H1 (cell line): ENCODE measurements at regions of chr16 and their contacts with region 1.

Region 1: DNA sequence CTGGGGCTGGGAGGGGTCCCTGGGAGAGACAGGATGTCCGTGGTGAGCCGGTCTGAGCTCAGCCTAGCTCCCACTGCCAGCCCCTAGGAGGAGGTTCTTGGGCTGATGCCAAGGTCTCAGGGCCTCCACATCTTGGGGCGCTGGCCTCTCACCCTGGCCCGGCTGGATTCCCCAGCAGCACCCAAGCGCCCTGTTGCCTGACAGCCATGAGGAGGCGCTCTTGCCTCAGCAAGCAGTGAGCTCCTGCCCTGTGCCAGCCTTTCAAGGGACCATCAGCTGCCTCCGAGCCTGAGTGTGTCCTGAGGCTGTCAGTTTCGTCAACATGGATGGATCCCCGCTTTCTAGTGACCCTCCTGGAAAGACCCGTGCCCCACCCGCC is 234.9 kb upstream of the CIBAR2 start:
- DNase-seq: peak in 1 of 2 experiments; percentile 74
- H3K4me3 ChIP-seq: no peak overlapping the region
- H3K27ac ChIP-seq: no peak overlapping the region
- H3K4me1 ChIP-seq: peaks cover 0 to 13% (median under 1%) of the 10 kb centered on the region in 4 experiments; a peak in 4 of 7 replicates
- H3K27me3 ChIP-seq: no peaks in the 10 kb centered on the region
- CTCF ChIP-seq: peak; percentile 89 to 95 (median 93)
- EP300 ChIP-seq: no peak
- POLR2A ChIP-seq: no peak
- RAD21 ChIP-seq: peak; percentile 91 to 95

Region 2: GRCh38 chr16:85321509-85322271 is 25.5 kb before region 1 on chr16:
- CTCF ChIA-PET with region 1: interaction called, 10 read pairs
- POLR2A ChIA-PET with region 1: no interaction called
- DNase-seq: no peak
- H3K4me3 ChIP-seq: no peak overlapping the region
- H3K27ac ChIP-seq: no peak overlapping the region
- H3K4me1 ChIP-seq: peaks cover 0 to 8% (median 3%) of the 10 kb centered on the region in 4 experiments; a peak in 4 of 7 replicates
- H3K27me3 ChIP-seq: peaks cover 0 to 1% (median 0%) of the 10 kb centered on the region in 4 experiments; a peak in 3 of 7 replicates
- CTCF ChIP-seq: no peak
- EP300 ChIP-seq: no peak
- POLR2A ChIP-seq: no peak
- RAD21 ChIP-seq: no peak

Region 3: GRCh38 chr16:85335584-85336491 is 11.4 kb before region 1 on chr16:
- CTCF ChIA-PET with region 1: interaction called, 15 read pairs
- POLR2A ChIA-PET with region 1: interaction called, 4 read pairs
- DNase-seq: no peak
- H3K4me3 ChIP-seq: peak overlapping the region in 3 of 4 experiments; percentile 28 to 52 (median 45); a peak in 3 of 8 replicates
- H3K27ac ChIP-seq: no peak overlapping the region
- H3K4me1 ChIP-seq: peaks cover 0 to 30% (median 20%) of the 10 kb centered on the region in 4 experiments; a peak in 6 of 7 replicates
- H3K27me3 ChIP-seq: peaks cover 27 to 53% (median 46%) of the 10 kb centered on the region in 4 experiments
- CTCF ChIP-seq: no peak
- EP300 ChIP-seq: no peak
- POLR2A ChIP-seq: no peak
- RAD21 ChIP-seq: no peak

Region 4: GRCh38 chr16:85369741-85370528 is 22.7 kb after region 1 on chr16:
- CTCF ChIA-PET with region 1: interaction called, 177 read pairs
- POLR2A ChIA-PET with region 1: interaction called, 3 read pairs
- DNase-seq: peak in 1 of 2 experiments; percentile 97
- H3K4me3 ChIP-seq: no peak overlapping the region
- H3K27ac ChIP-seq: no peak overlapping the region
- H3K4me1 ChIP-seq: peaks cover 8 to 18% (median 16%) of the 10 kb centered on the region in 4 experiments
- H3K27me3 ChIP-seq: peaks cover 0 to 11% (median 3%) of the 10 kb centered on the region in 4 experiments; a peak in 3 of 7 replicates
- CTCF ChIP-seq: peak; percentile 74 to 87 (median 80)
- EP300 ChIP-seq: no peak
- POLR2A ChIP-seq: no peak
- RAD21 ChIP-seq: peak; percentile 48 to 64

Region 5: DNA sequence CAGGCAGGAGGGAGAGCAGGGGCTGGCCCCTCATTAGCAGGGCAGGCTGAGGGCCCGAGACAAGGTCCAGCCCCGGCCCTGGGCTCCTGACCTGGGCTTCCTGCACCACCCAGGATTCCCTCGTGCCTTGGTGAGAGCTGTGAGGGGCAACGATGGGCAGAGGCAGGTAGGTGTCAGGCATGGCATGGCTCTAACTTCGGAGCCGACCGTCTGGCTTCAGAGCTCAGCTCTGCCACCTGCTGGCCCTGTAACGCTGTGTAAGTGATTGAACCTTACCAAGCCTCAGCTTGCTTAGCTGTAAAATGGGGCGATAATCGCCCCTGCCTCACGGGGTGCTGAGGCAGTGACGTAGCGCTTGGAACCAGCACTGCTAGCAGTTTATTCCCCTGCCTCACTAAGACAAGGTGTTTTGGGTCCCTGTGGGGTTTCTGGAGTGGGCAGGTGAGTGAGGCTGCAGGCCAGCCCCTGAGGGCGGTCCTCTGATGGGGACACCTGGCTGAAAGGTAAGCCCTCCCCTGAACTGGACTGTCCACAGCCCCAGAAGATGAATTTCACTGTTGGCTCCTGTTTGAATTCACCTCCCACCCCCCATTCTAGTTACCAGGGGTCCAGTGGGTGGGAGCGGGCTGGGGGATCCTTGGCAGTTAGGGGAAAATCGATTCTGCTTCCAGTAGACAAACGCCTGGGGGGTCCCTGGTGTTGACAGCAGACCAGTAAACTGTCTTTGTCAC is 81.1 kb after region 1 on chr16:
- CTCF ChIA-PET with region 1: interaction called, 13 read pairs
- POLR2A ChIA-PET with region 1: no interaction called
- DNase-seq: peak in 1 of 2 experiments; percentile 84
- H3K4me3 ChIP-seq: no peak overlapping the region
- H3K27ac ChIP-seq: no peak overlapping the region
- H3K4me1 ChIP-seq: peaks cover 0 to 4% (median 0%) of the 10 kb centered on the region in 4 experiments; a peak in 3 of 7 replicates
- H3K27me3 ChIP-seq: no peaks in the 10 kb centered on the region; a peak in 1 of 7 replicates
- CTCF ChIP-seq: peak; percentile 70 to 87 (median 86)
- EP300 ChIP-seq: no peak
- POLR2A ChIP-seq: no peak
- RAD21 ChIP-seq: peak; percentile 61 to 67